T-cell (primary cell): ENCODE measurements at regions of chr13 and their contacts with region 1.

Region 1: DNA sequence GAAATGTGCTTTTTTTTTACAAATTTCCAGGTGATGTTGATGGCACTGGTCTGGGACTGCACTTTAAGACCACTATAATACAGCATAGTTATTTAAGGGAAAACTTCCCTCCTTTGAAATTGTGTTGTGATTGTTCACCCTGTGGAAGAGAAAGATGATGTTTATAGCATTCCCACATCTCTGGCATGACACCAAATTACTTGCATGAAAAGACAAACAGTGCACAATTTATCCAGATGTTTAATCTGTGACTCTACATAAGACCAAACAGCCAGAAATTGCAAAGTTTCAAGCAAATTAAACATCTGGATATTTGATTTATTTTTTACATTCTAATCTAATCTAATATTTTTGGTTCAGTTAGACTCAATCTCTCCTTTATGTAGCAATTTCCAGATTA is 51.6 kb downstream of the UFM1 start:
- DNase-seq: no peak
- ATAC-seq: no peak
- H3K4me3 ChIP-seq: no peak overlapping the region
- H3K4me3 Mint-ChIP-seq: no peak overlapping the region
- H3K27ac ChIP-seq: no peak overlapping the region
- H3K27ac Mint-ChIP-seq: no peak overlapping the region
- H3K4me1 ChIP-seq: peaks cover 0 to 3% of the 10 kb centered on the region in 2 experiments
- H3K4me1 Mint-ChIP-seq: peaks cover 0 to 4% (median 3%) of the 10 kb centered on the region in 3 donors
- H3K27me3 ChIP-seq: peaks cover 0 to 2% of the 10 kb centered on the region in 2 experiments
- H3K27me3 Mint-ChIP-seq: peaks cover 0 to 7% of the 10 kb centered on the region in 2 donors

Region 2: GRCh38 chr13:37679043-37679442 is 722.2 kb before region 1 on chr13:
- CTCF ChIA-PET with region 1: no interaction called
- POLR2A ChIA-PET with region 1: interaction called in 1 of 2 experiments, 10 read pairs
- DNase-seq: no peak
- ATAC-seq: no peak
- H3K4me3 ChIP-seq: no peak overlapping the region
- H3K4me3 Mint-ChIP-seq: no peak overlapping the region
- H3K27ac ChIP-seq: no peak overlapping the region
- H3K27ac Mint-ChIP-seq: no peak overlapping the region
- H3K4me1 ChIP-seq: no peaks in the 10 kb centered on the region
- H3K4me1 Mint-ChIP-seq: no peaks in the 10 kb centered on the region
- H3K27me3 ChIP-seq: no peaks in the 10 kb centered on the region
- H3K27me3 Mint-ChIP-seq: no peaks in the 10 kb centered on the region

Region 3: DNA sequence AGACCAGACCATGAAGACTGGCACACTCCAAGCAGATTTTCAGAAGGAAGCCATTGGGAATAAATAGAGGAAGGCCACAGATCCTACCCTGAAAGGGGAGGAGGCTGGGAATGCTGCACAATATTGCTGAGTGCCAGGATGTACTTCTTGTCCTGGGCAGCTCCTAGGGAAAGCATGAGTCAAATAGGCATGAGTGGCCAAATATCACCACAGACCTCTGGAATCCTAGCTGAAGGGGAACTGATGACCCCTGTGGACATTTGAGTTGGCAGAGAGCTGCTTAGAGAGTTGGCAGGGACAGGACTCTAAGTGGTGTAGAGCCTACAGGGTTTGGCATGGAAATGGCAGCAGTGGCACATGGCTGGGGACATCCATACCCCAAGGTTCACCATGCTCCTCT is 297.4 kb before region 1 on chr13:
- CTCF ChIA-PET with region 1: no interaction called
- POLR2A ChIA-PET with region 1: no interaction called
- DNase-seq: no peak
- ATAC-seq: no peak
- H3K4me3 ChIP-seq: no peak overlapping the region
- H3K4me3 Mint-ChIP-seq: no peak overlapping the region
- H3K27ac ChIP-seq: no peak overlapping the region
- H3K27ac Mint-ChIP-seq: no peak overlapping the region
- H3K4me1 ChIP-seq: no peaks in the 10 kb centered on the region
- H3K4me1 Mint-ChIP-seq: no peaks in the 10 kb centered on the region
- H3K27me3 ChIP-seq: no peaks in the 10 kb centered on the region
- H3K27me3 Mint-ChIP-seq: no peaks in the 10 kb centered on the region